ENCODE measurements at regions of chr12 and their contacts with region 1.

Region 1: GRCh38 chr12:53039851-53040250 is 10.0 kb upstream of the TNS2 start:
- DNase-seq: no peak
- ATAC-seq: no peak
- H3K4me3 ChIP-seq: no peak overlapping the region
- H3K27ac ChIP-seq: no peak overlapping the region
- H3K4me1 ChIP-seq: peaks cover 17% of the 10 kb centered on the region
- CTCF ChIP-seq: no peak
- EP300 ChIP-seq: no peak
- POLR2A ChIP-seq: no peak
- RAD21 ChIP-seq: no peak

Region 2: DNA sequence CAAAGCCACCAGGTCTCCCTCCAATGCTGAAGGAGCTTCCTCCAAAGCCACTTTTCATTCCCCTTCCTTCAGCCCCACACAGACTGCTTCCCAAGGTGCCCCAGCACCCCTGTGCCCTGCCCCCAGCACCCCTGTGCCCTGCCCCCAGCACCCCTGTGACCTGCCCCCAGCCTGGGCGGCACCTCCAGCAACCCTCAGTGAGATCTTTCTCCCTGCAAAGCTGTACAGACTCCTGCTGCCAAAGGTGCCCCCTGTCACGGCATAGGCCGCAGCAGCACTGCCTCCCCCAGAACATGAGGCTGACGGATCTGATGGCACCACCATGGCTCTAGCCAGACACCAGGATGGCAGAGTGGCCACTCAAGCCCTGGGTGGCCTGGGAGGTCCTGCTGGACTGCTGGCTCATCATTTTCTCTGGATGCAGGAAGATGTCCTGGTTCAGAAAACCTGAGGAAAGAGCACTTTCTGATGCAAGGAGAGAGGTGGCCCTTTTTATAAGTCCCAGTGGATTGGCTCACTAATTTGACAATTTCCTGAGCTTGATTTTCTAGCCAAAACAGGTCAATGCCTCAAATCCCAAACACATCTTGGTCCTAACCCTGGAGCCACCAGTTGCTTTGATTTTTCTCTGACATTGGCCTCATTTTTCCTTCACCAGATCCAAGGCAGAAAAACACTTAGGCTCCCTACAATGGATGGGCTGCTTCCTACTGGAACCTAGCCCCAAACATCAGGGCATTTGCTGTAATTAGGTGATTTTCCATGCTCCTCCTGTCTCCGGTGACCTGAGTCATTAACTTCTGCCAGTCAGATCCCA is 303.8 kb before region 1 on chr12:
- CTCF ChIA-PET with region 1: no interaction called
- POLR2A ChIA-PET with region 1: no interaction called
- DNase-seq: no peak
- ATAC-seq: no peak
- H3K4me3 ChIP-seq: no peak overlapping the region
- H3K27ac ChIP-seq: no peak overlapping the region
- H3K4me1 ChIP-seq: no peaks in the 10 kb centered on the region
- CTCF ChIP-seq: no peak
- EP300 ChIP-seq: no peak
- POLR2A ChIP-seq: no peak
- RAD21 ChIP-seq: no peak

Region 3: DNA sequence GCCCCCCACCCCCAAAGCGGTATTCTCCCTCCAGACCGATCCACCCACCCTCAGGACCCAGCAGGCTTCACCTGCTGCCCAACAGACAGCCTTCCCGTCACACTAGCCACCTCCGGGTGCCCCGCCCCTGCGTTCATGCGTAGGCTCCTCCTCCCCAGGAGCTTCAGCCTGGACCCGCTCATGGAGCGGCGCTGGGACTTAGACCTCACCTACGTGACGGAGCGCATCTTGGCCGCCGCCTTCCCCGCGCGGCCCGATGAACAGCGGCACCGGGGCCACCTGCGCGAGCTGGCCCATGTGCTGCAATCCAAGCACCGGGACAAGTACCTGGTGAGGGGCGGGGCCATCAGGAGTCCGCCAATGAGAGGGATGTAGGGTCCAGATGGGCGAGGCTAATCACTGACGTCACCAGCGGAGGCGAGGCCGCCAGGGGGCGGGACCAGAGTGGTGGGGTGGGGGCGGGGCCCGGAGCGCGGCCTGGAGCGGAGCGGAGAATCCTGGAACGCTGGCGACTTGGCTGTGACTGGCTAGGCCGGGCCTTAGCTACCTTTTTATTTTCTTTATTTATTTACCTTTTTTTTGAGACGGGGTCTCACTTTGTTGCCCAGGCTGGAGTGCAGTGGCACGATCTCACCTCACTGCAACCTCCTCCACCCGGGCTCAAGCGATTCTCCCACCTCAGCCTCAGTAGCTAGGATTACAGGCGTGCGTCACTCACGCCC is 14.4 kb after region 1 on chr12:
- CTCF ChIA-PET with region 1: interaction called, 308 read pairs
- POLR2A ChIA-PET with region 1: interaction called, 6 read pairs
- DNase-seq: peak; percentile 86 to 96
- ATAC-seq: peak; percentile 60 to 74
- H3K4me3 ChIP-seq: peak overlapping the region; percentile 58
- H3K27ac ChIP-seq: peak overlapping the region; percentile 99
- H3K4me1 ChIP-seq: peaks cover 54% of the 10 kb centered on the region
- CTCF ChIP-seq: no peak
- EP300 ChIP-seq: no peak
- POLR2A ChIP-seq: peak; percentile 50
- RAD21 ChIP-seq: no peak